IMR-90 (cell line): ENCODE measurements at regions of chr13 and their contacts with region 1.

Region 1: DNA sequence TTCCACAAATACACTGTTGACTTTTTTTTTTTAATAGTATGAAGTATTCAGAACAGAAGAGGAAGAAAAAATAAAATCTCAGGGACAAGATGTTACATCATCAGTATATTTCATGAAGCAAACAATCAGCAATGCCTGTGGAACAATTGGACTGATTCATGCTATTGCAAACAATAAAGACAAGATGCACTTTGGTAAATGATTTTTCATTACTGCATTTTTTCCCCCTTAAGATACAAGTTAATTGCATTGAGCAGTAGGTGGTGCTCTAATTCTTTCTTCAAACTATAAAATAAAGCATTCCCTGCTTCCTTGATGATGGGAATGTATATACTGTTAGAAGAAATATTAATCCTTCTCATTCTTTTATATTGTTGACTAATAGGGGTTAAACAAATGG is 17.1 kb downstream of the UCHL3 start:
- DNase-seq: peak; percentile 71
- ATAC-seq: peak; percentile 79
- H3K4me3 ChIP-seq: no peak overlapping the region
- H3K27ac ChIP-seq: no peak overlapping the region
- H3K4me1 ChIP-seq: peaks cover 3% of the 10 kb centered on the region
- H3K27me3 ChIP-seq: no peaks in the 10 kb centered on the region
- CTCF ChIP-seq: peak; percentile 62
- POLR2A ChIP-seq: no peak
- RAD21 ChIP-seq: peak; percentile 71

Region 2: DNA sequence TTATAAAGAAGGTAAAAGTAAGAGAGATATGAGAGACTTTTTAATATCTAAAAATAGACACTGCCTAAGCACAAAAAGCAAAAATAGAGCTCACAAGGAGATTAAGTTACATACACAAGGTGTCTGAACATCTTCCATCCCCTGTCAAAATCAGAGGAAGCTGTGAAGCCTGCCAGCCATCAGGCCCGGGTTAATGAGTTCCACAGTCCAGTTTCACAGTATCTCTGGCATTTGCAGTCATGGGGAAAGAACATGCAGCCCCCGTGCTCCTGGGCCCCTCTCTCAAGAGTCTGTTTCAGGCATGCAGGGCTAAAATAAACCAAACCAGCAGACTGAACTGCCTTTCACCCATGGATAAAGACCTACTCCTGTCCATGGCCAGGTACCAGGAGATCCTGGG is 163.9 kb before region 1 on chr13:
- CTCF ChIA-PET with region 1: no interaction called
- POLR2A ChIA-PET with region 1: no interaction called
- dilution Hi-C with region 1: no loop called
- in situ Hi-C with region 1: no loop called
- intact Hi-C with region 1: no loop called
- DNase-seq: no peak
- ATAC-seq: no peak
- H3K4me3 ChIP-seq: no peak overlapping the region
- H3K27ac ChIP-seq: no peak overlapping the region
- H3K4me1 ChIP-seq: peaks cover 7% of the 10 kb centered on the region
- H3K27me3 ChIP-seq: no peaks in the 10 kb centered on the region
- CTCF ChIP-seq: no peak
- POLR2A ChIP-seq: no peak
- RAD21 ChIP-seq: no peak

Region 3: DNA sequence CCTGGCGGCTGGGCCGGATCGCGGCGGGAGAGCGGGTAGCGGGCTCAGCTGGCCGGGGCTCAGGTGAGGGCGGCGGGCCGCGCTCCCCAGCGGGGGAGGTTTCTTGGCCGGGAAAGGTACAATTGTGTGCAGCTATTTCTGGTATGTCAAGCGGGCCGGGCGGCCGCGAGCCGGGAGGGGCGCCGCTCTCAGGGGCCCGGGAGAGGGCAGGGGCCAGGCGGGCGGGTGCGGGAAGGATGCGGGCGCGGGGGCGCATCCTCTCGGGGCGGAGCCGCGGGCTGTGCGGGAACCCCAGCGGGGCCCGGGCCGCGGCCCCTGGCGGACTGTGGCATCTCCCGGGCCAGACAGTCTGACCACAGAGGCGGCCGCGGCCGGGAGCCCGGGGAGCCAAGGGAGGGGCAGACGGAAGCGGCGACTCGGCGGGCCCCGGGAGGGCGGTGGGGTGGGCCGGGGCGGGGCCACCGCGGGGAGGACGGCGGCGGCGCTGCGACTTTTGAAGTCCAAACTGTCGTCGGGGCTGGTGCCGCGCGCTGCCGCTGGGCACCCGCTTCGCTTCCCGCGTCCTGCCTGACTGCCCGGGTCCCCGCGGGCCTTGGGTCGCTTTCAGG is 69.3 kb after region 1 on chr13 and contains the start of gene LMO7:
- CTCF ChIA-PET with region 1: no interaction called
- POLR2A ChIA-PET with region 1: interaction called, 5 read pairs
- dilution Hi-C with region 1: no loop called
- in situ Hi-C with region 1: no loop called
- intact Hi-C with region 1: loop called (anchors 1 kb)
- DNase-seq: peak; percentile 52
- ATAC-seq: peak; percentile 68
- H3K4me3 ChIP-seq: peak within 1 kb of the TSS; percentile 80
- H3K27ac ChIP-seq: peak within 1 kb of the TSS; percentile 86
- H3K4me1 ChIP-seq: peaks cover 20% of the 10 kb centered on the region
- H3K27me3 ChIP-seq: no peaks in the 10 kb centered on the region
- CTCF ChIP-seq: no peak
- POLR2A ChIP-seq: no peak
- RAD21 ChIP-seq: no peak
- total RNA-seq, gene LMO7: 367 and 485 TPM in 2 replicates

Region 4: GRCh38 chr13:75660694-75661093 is 94.0 kb after region 1 on chr13:
- CTCF ChIA-PET with region 1: no interaction called
- POLR2A ChIA-PET with region 1: no interaction called
- dilution Hi-C with region 1: no loop called
- in situ Hi-C with region 1: no loop called
- intact Hi-C with region 1: loop called (anchors 5 kb)
- DNase-seq: no peak
- ATAC-seq: no peak
- H3K4me3 ChIP-seq: no peak overlapping the region
- H3K27ac ChIP-seq: peak overlapping the region; percentile 40; the same call in 1 of the 2 replicates
- H3K4me1 ChIP-seq: peaks cover 14% of the 10 kb centered on the region
- H3K27me3 ChIP-seq: no peaks in the 10 kb centered on the region
- CTCF ChIP-seq: no peak
- POLR2A ChIP-seq: no peak
- RAD21 ChIP-seq: no peak

Region 5: GRCh38 chr13:75830842-75831241 is 264.2 kb after region 1 on chr13:
- CTCF ChIA-PET with region 1: no interaction called
- POLR2A ChIA-PET with region 1: no interaction called
- dilution Hi-C with region 1: no loop called
- in situ Hi-C with region 1: no loop called
- intact Hi-C with region 1: loop called (anchors 10 kb)
- DNase-seq: peak; percentile 78
- ATAC-seq: peak; percentile 28
- H3K4me3 ChIP-seq: no peak overlapping the region
- H3K27ac ChIP-seq: no peak overlapping the region
- H3K4me1 ChIP-seq: peaks cover 6% of the 10 kb centered on the region; the same call in 1 of the 2 replicates
- H3K27me3 ChIP-seq: no peaks in the 10 kb centered on the region
- CTCF ChIP-seq: no peak
- POLR2A ChIP-seq: no peak
- RAD21 ChIP-seq: no peak